AG04449 (cell line): ENCODE measurements at regions of chr1 and their contacts with region 1.

Region 1: DNA sequence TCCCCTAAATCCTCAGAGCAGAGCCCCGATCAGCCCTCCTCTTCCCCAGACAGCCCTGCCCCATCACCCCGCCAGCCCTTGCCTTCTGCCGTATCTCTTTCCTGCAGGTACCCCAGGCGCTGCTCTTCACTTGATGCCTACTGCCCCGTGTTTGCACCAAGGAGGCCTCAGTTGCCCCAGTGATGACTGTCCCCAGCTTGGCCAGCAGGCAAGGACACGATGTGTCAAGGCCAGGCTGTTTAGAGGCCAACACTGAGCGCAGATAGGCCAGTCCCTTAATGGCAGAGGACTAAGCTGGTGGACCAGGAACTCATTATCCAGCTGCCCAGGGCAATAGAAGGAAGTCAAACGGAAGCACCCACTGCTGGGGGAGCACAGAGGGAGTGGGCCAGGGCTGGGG is 68.4 kb downstream of the CAMK2N1 start:
- DNase-seq: no peak
- H3K4me3 ChIP-seq: no peak overlapping the region
- CTCF ChIP-seq: no peak

Region 2: DNA sequence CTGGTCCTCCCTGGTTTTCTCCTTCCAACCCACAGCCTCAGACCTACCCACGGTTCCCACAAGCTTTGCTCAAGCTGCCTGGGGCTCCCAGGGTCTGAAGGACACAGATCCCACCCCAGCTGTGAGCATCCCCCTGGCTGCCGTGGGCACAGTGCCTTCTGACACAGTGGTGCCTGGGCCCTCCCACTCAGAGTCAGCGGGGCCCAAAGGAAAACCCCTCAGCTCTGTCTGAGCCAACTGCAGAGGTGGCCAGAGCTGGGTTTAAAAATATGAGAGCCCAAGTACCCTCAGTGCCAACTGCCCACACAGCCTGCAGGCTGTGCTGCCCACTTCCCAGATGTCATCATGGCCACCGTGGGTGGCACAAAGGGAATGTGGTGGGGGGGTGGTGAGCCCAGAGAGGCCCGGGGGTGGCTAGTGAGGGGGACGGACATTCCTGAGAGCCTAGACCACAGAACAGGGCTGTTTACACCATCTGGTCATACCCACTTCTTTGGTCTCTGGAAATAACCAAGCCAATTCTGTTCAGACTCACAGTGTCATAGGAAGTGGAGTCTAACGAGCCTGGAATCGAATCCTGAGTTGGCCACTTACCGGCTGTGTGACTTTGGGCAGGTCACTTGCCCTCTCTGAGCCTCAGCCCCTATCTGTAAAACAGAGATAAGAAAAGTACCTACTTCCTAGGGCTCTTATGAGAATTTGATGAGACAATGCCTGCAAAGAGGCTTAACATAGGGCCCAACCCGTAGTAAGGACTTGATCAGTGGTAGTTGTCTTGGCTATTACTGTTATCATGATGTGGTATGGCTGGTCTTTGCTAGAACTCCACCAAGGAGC is 17.0 kb before region 1 on chr1:
- CTCF ChIA-PET with region 1: no interaction called
- POLR2A ChIA-PET with region 1: no interaction called
- DNase-seq: no peak
- H3K4me3 ChIP-seq: no peak overlapping the region
- CTCF ChIP-seq: no peak

Region 3: DNA sequence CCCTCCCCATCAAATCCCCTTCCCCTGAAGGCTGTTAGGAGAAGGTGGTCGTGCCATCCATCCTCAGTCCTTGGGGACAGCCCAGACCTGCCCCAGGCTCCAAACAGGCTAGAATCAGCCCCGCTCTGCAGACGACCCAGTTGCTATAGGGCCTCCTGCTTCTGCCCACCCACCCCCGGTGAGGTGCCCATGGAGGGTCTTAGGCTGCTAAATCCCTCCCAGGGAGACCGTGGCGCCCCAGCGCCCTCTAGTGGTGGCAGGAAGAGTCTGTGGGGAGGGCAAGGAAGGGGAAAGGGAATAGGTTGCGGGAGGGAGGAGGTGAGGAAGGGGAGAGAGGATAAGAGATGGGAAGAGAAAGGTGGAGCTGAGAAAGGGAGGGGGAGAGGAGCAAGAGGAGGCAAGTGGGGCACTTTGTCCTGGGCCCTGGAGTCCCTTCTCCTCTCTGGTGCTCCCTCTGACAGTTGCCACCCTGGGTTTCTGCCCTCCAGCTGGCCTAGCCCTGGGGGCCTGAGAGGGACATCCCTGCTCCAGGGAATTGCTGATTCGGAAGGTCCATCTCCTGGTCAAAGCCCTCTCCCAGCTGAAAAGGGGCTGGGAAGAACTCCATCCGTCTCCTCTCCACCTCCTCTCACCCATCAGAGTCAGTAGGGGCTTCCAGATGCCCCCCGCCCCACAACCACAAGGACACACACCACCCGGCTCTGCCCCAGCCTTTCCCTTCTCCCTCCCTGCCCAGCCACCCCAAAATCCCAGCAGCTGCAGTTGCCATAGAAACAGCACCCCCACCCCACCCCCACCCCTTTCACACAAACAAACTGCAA is 13.0 kb after region 1 on chr1:
- CTCF ChIA-PET with region 1: interaction called, 35 read pairs
- POLR2A ChIA-PET with region 1: interaction called, 3 read pairs
- DNase-seq: no peak
- H3K4me3 ChIP-seq: no peak overlapping the region
- CTCF ChIP-seq: peak; percentile 91